ENCODE measurements at regions of chr12 and their contacts with region 1.

Region 1: GRCh38 chr12:10540776-10541205 is 35.1 kb downstream of the EIF2S3B start:
- DNase-seq: no peak
- H3K4me3 ChIP-seq: no peak overlapping the region
- H3K27ac ChIP-seq: no peak overlapping the region
- H3K4me1 ChIP-seq: no peaks in the 10 kb centered on the region
- H3K27me3 ChIP-seq: no peaks in the 10 kb centered on the region
- CTCF ChIP-seq: no peak
- EP300 ChIP-seq: no peak
- POLR2A ChIP-seq: no peak

Region 2: GRCh38 chr12:10331642-10332239 is 209.1 kb before region 1 on chr12:
- in situ Hi-C with region 1: loop called in 1 of 4 experiments (anchors 25 kb)
- intact Hi-C with region 1: no loop called
- DNase-seq: no peak
- H3K4me3 ChIP-seq: no peak overlapping the region
- H3K27ac ChIP-seq: no peak overlapping the region
- H3K4me1 ChIP-seq: no peaks in the 10 kb centered on the region
- H3K27me3 ChIP-seq: no peaks in the 10 kb centered on the region
- CTCF ChIP-seq: peak; percentile 64 to 76 (median 68)
- EP300 ChIP-seq: no peak
- POLR2A ChIP-seq: no peak

Region 3: DNA sequence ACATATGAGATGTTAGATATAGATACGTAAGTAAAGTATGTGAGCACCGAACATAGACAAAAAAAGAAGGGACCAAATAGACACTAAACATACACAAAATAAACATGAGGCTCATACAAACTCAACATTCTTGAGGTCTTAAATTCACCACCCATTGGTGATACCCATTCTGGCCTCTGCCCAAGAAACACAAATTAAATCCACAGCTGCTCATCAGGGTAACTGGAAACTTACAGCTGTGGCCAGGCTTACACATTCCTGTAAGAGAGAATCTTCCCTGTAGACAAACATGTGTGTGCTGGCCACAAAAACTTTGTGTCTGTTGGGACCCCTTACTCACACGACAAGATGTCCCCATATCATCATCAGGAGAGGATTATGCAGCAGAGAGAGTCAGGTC is 50.2 kb after region 1 on chr12:
- in situ Hi-C with region 1: no loop called
- intact Hi-C with region 1: loop called (anchors 5 kb)
- DNase-seq: no peak
- H3K4me3 ChIP-seq: no peak overlapping the region
- H3K27ac ChIP-seq: no peak overlapping the region
- H3K4me1 ChIP-seq: no peaks in the 10 kb centered on the region
- H3K27me3 ChIP-seq: no peaks in the 10 kb centered on the region
- CTCF ChIP-seq: no peak
- EP300 ChIP-seq: no peak
- POLR2A ChIP-seq: no peak